AG04450 (cell line): ENCODE measurements at regions of chr11 and their contacts with region 1.

Region 1: DNA sequence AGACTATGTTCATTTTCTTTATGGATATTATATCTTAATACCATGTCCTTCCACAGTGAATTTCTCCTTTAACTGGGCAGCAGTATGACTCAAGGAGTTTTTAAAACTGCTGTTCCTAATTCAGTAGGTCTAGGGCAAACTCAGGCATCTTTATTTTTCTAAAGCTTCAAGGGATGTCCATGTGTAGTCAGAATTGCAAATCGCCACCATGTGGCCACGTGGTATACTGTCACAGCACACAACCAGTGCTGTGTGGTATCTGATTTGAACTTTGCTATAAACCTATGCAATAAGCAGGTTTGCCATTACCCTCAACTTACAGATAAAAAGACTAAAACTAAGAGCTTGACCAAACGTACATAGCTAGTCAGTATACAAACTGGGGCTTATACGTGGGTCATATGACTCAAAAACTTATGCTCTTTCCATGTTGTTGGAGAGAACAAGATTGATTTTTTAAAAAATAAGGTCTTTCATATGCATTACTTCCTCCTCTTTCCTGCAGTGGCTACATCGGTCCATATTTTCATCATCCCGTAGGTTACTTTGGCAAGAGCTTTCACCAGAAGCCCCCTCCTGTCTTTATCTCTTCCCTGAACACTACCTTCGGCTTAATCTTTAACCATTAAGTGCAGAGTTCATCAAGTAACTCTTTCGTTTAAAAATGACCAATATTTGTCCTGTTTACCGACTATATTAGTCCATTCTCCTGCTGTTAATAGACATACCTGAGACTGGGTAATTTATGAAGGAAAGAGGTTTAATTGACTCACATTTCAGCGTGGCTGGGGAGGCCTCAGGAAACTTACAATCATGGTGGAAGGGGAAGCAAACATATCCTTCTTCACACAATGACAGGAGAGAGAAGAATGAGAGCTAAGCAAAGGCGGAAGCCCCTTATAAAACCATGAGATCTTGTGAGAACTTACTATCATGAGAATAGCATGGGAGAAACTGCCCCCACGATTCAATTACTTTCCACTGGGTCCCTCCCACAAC is 8.0 kb upstream of the HTATIP2 start:
- DNase-seq: no peak
- H3K4me3 ChIP-seq: no peak overlapping the region
- H3K27ac ChIP-seq: no peak overlapping the region
- H3K27me3 ChIP-seq: no peaks in the 10 kb centered on the region
- CTCF ChIP-seq: peak; percentile 61

Region 2: DNA sequence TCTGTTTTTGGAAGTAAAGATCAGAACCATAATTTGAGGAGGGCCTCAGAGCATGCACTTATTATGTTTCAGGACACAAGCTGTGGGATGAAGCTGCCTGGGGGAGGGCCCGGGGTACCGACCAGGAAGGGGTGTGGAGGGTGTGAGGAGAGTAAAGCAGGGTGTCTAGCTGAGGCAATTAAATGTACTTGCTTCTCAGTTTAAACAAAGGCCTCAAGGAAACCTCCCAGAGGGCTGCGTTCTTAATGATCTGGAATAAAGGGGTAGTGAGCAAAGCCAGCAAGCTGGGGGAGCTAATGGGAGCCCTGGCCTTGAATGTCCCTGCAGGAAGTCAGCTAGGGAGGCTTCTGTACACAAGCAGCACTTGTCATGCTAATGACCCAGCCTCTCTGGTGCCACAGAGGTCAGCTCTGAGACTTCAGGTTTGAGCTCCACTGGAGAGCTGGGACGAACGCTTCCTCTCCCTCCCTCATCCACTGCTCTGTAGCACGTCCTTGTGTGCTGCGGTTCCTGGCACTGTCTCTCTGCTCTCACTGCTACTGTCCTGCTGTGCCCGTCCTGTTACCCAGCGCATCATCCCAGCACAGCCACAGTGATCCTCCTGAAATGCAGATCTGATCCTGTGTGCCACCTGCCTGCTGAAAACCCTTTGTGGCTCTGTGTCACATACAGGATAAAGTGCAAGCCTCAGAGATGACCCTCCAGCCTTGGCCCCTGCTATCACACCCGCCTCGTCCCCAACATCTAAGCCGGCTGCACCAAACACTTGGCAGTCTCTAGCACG is 355.0 kb before region 1 on chr11:
- CTCF ChIA-PET with region 1: no interaction called
- POLR2A ChIA-PET with region 1: no interaction called
- DNase-seq: no peak
- H3K4me3 ChIP-seq: no peak overlapping the region
- H3K27ac ChIP-seq: no peak overlapping the region
- H3K27me3 ChIP-seq: no peaks in the 10 kb centered on the region
- CTCF ChIP-seq: no peak

Region 3: GRCh38 chr11:20226933-20227332 is 128.6 kb before region 1 on chr11:
- CTCF ChIA-PET with region 1: no interaction called
- POLR2A ChIA-PET with region 1: no interaction called
- DNase-seq: no peak
- H3K4me3 ChIP-seq: no peak overlapping the region
- H3K27ac ChIP-seq: no peak overlapping the region
- H3K27me3 ChIP-seq: no peaks in the 10 kb centered on the region
- CTCF ChIP-seq: no peak

Region 4: DNA sequence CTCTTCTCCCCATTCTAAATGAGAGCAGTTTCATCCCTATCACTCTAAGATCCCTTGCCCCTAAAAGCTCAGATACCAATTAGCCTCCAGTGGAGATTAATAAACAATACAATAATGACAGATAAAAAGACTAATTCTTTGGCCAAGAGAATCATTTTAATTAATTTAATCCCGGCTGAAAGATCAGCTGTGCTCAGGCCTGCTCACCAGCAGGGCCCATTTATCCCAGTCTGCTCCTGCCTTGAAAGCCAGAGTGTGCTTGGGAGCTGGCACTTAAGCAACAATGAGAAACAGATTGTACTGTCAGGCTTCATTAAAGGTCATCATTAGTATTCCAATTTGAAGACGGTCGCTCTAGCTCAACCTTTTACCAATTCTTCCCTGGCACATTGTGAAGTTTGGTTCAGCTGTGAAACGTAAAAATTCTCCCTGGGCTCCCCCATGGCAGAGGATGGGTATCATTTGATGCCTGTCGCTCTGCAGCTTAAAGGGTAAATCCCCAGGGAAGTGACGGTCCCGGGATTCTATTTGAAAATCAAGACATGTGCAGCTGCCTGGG is 28.1 kb before region 1 on chr11:
- CTCF ChIA-PET with region 1: interaction called, 10 read pairs
- POLR2A ChIA-PET with region 1: no interaction called
- DNase-seq: no peak
- H3K4me3 ChIP-seq: no peak overlapping the region
- H3K27ac ChIP-seq: no peak overlapping the region
- H3K27me3 ChIP-seq: peaks cover 3% of the 10 kb centered on the region
- CTCF ChIP-seq: no peak

Region 5: GRCh38 chr11:20342347-20343141 is 13.0 kb before region 1 on chr11:
- CTCF ChIA-PET with region 1: interaction called, 18 read pairs
- POLR2A ChIA-PET with region 1: no interaction called
- DNase-seq: no peak
- H3K4me3 ChIP-seq: no peak overlapping the region
- H3K27ac ChIP-seq: no peak overlapping the region
- H3K27me3 ChIP-seq: peaks cover 24% of the 10 kb centered on the region
- CTCF ChIP-seq: no peak